Heart left ventricle (tissue), 16 donors: ENCODE measurements at regions of chr5 and their contacts with region 1.

Region 1: DNA sequence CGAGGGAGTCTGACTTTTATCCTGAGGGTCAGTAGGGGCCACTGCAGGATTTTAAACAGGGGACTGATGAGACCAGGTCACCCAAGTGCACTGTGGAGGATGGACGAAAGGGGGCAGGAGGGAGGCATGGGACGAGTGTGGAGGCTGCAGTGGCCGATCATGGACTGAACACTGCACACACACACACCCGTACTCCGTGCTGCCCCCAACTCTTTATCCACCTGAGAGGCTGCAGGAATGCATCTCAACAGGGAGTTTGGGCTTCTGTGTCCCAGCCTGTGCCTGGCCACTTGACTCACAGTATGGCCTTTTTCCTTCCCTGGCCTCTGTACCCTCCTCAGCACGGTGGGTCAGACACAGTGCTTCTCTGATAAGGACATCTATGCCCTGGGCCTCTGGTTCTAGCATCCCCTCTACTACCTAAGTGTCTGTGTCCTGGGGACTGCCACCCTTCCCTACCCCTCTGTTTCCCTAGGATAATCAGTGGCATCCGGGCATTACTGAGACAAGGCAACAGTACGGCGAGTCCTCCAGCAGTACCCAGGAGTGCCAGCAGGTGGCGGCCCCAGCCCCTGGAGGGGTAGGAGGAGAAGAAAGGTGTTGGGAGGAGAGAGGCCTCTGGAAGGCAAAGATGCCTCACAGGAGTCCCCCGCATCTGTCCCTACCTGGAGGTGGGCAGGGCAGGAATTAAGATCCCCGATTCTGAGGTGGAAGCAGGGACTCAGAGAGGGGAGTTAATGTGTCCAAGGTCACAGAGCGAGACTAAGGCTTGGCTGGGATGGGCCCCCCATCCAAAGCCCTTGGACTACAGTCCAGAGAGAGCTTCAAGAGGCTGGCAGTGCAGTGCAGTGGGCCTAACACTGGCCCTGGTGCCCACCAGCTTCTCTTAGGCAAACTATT is 5.1 kb upstream of the CDX1 start:
- DNase-seq: peak; percentile 82 to 91 (median 83)
- ATAC-seq: peak; percentile 41 to 70 (median 56)
- H3K4me3 ChIP-seq: no peak overlapping the region
- H3K27ac ChIP-seq: peak overlapping the region in 11 of 12 donors; percentile 37 to 96 (median 84)
- H3K4me1 ChIP-seq: peaks cover 0 to 85% (median 58%) of the 10 kb centered on the region in 12 donors
- H3K27me3 ChIP-seq: peaks cover 0 to 4% (median 0%) of the 10 kb centered on the region in 9 donors
- CTCF ChIP-seq: peak; percentile 83 to 95 (median 91)
- POLR2A ChIP-seq: no peak

Region 2: GRCh38 chr5:150112261-150113046 is 49.0 kb before region 1 on chr5:
- intact Hi-C with region 1: no loop called
- DNase-seq: peak in 2 of 5 donors; percentile 74 to 76
- ATAC-seq: peak in 3 of 4 donors; percentile 69 to 74 (median 70)
- H3K4me3 ChIP-seq: no peak overlapping the region
- H3K27ac ChIP-seq: peak overlapping the region in 9 of 12 donors; percentile 4 to 62 (median 35)
- H3K4me1 ChIP-seq: peaks cover 0 to 38% (median 10%) of the 10 kb centered on the region in 12 donors
- H3K27me3 ChIP-seq: no peaks in the 10 kb centered on the region
- CTCF ChIP-seq: no peak
- POLR2A ChIP-seq: no peak

Region 3: GRCh38 chr5:150129813-150130492 is 31.5 kb before region 1 on chr5:
- intact Hi-C with region 1: loop called in 2 of 10 experiments (anchors 2 kb)
- DNase-seq: peak; percentile 73 to 85 (median 79)
- ATAC-seq: peak; percentile 47 to 83 (median 75)
- H3K4me3 ChIP-seq: peak overlapping the region in 7 of 12 donors; percentile 3 to 43 (median 6)
- H3K27ac ChIP-seq: peak overlapping the region in 7 of 12 donors; percentile 3 to 34 (median 20)
- H3K4me1 ChIP-seq: peaks cover 0 to 48% (median 19%) of the 10 kb centered on the region in 12 donors
- H3K27me3 ChIP-seq: no peaks in the 10 kb centered on the region
- CTCF ChIP-seq: peak; percentile 86 to 97 (median 92)
- POLR2A ChIP-seq: no peak

Region 4: GRCh38 chr5:150350524-150351344 is 189.2 kb after region 1 on chr5:
- intact Hi-C with region 1: loop called in 3 of 10 experiments (anchors 5 to 10 kb)
- DNase-seq: peak; percentile 67 to 79 (median 77)
- ATAC-seq: peak; percentile 83 to 93 (median 92)
- H3K4me3 ChIP-seq: no peak overlapping the region
- H3K27ac ChIP-seq: no peak overlapping the region
- H3K4me1 ChIP-seq: peaks cover 0 to 21% (median 0%) of the 10 kb centered on the region in 12 donors
- H3K27me3 ChIP-seq: no peaks in the 10 kb centered on the region
- CTCF ChIP-seq: peak; percentile 31 to 74 (median 55)
- POLR2A ChIP-seq: no peak